ENCODE measurements at regions of chr7 and their contacts with region 1.

Region 1: GRCh38 chr7:100632951-100633717 is 8.2 kb downstream of the TFR2 start:
- DNase-seq: no peak
- ATAC-seq: no peak
- H3K4me3 ChIP-seq: peak overlapping the region; percentile 47 to 57 (median 50)
- H3K27ac ChIP-seq: no peak overlapping the region
- H3K4me1 ChIP-seq: peaks cover 0 to 8% of the 10 kb centered on the region in 2 donors
- H3K27me3 ChIP-seq: peaks cover 19 to 28% (median 26%) of the 10 kb centered on the region in 3 donors
- CTCF ChIP-seq: peak in 1 of 5 experiments; percentile 21
- POLR2A ChIP-seq: no peak

Region 2: DNA sequence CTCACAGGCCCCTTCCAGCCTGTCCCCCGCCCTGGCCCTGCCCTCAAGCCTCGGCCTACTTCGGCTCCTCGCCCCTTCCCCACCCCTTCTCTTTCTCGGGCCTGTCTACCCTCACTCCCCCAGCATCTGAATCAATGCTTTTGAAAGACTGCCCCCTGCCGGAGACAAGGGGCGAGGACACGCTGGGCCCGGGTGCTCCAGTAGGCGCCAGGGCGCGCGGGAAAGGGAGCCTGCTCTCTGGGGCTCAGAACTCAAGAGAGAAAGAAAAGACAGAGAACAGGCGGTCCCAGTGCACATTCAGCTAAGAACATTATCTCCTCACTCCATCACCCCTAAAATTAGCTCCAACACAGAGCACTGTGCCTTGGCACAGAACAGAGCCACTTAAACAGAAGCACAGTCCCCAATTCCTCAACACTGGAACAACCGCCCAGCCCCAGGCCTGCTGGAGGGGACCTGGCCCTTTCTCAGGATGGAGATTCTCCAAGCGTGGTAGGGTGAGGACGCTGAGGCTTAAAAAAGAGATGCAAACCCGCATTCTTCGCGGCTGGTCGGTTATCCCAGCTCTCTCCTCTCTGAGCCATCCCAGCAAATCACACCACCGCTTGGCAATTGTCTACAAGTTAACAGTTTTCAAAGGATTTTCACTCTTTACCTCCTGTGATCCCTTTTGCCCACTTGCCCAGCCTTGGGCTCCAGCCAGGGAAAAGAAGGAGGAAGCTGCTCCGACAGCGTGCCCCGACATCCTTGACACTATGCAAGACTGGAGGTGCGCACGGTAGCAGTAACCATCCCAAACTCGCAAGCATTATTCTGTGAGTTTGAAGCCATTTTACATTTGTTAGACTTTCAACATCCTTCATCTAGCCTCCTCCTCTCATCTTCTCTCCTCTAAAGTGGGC is 58.8 kb after region 1 on chr7:
- in situ Hi-C with region 1: no loop called
- intact Hi-C with region 1: loop called (anchors 5 kb)
- DNase-seq: peak; percentile 59 to 68
- ATAC-seq: peak; percentile 55 to 73
- H3K4me3 ChIP-seq: peak overlapping the region; percentile 37 to 89 (median 71)
- H3K27ac ChIP-seq: peak overlapping the region; percentile 69 to 84 (median 77)
- H3K4me1 ChIP-seq: peaks cover 44 to 48% of the 10 kb centered on the region in 2 donors
- H3K27me3 ChIP-seq: no peaks in the 10 kb centered on the region
- CTCF ChIP-seq: peak; percentile 78 to 93 (median 89)
- POLR2A ChIP-seq: no peak

Measured in gastrocnemius medialis (tissue), 4 donors.